B cell (primary cell): ENCODE measurements at regions of chr5 and their contacts with region 1.

Region 1: GRCh38 chr5:140639148-140639979 is at the start of gene TMCO6:
- DNase-seq: peak; percentile 95
- ATAC-seq: peak; percentile 99
- H3K4me3 ChIP-seq: peak within 1 kb of the TSS; percentile 65 to 92 (median 89)
- H3K4me3 Mint-ChIP-seq: peak within 1 kb of the TSS; percentile 91
- H3K27ac ChIP-seq: peak within 1 kb of the TSS; percentile 66 to 89
- H3K27ac Mint-ChIP-seq: peak within 1 kb of the TSS; percentile 92
- H3K4me1 ChIP-seq: peaks cover 5 to 14% of the 10 kb centered on the region in 2 donors
- H3K4me1 Mint-ChIP-seq: peaks cover 24% of the 10 kb centered on the region
- H3K27me3 ChIP-seq: no peaks in the 10 kb centered on the region
- H3K27me3 Mint-ChIP-seq: no peaks in the 10 kb centered on the region
- CTCF ChIP-seq: peak; percentile 77
- total RNA-seq, gene TMCO6: 33.3 and 36.2 TPM in 2 replicates

Region 2: GRCh38 chr5:140220032-140220697 is 419.2 kb before region 1 on chr5:
- CTCF ChIA-PET with region 1: no interaction called
- POLR2A ChIA-PET with region 1: no interaction called
- intact Hi-C with region 1: no loop called
- DNase-seq: no peak
- ATAC-seq: no peak
- H3K4me3 ChIP-seq: no peak overlapping the region
- H3K4me3 Mint-ChIP-seq: no peak overlapping the region
- H3K27ac ChIP-seq: no peak overlapping the region
- H3K27ac Mint-ChIP-seq: no peak overlapping the region
- H3K4me1 ChIP-seq: no peaks in the 10 kb centered on the region
- H3K4me1 Mint-ChIP-seq: no peaks in the 10 kb centered on the region
- H3K27me3 ChIP-seq: no peaks in the 10 kb centered on the region
- H3K27me3 Mint-ChIP-seq: no peaks in the 10 kb centered on the region
- CTCF ChIP-seq: no peak

Region 3: GRCh38 chr5:140547508-140548299 is 91.7 kb before region 1 on chr5 and contains the start of gene EIF4EBP3:
- CTCF ChIA-PET with region 1: interaction called, 13 read pairs
- POLR2A ChIA-PET with region 1: interaction called, 3 read pairs
- intact Hi-C with region 1: loop called (anchors 1 kb)
- DNase-seq: peak; percentile 91
- ATAC-seq: peak; percentile 97
- H3K4me3 ChIP-seq: peak within 1 kb of the TSS; percentile 35 to 93 (median 79)
- H3K4me3 Mint-ChIP-seq: peak within 1 kb of the TSS; percentile 94
- H3K27ac ChIP-seq: peak within 1 kb of the TSS; percentile 81 to 85
- H3K27ac Mint-ChIP-seq: peak within 1 kb of the TSS; percentile 94
- H3K4me1 ChIP-seq: peaks cover 10 to 30% of the 10 kb centered on the region in 2 donors
- H3K4me1 Mint-ChIP-seq: peaks cover 30% of the 10 kb centered on the region
- H3K27me3 ChIP-seq: no peaks in the 10 kb centered on the region
- H3K27me3 Mint-ChIP-seq: no peaks in the 10 kb centered on the region
- CTCF ChIP-seq: peak; percentile 77
- total RNA-seq, gene EIF4EBP3: 8.8 and 15.0 TPM in 2 replicates

Region 4: GRCh38 chr5:140564196-140565023 is 75.0 kb before region 1 on chr5 and contains the starts of genes APBB3 and SLC35A4:
- CTCF ChIA-PET with region 1: interaction called, 4 read pairs
- POLR2A ChIA-PET with region 1: interaction called, 3 read pairs
- intact Hi-C with region 1: loop called (anchors 1 kb)
- DNase-seq: peak; percentile 99
- ATAC-seq: peak; percentile 89
- H3K4me3 ChIP-seq: peak within 1 kb of the TSS; percentile 71 to 95 (median 91)
- H3K4me3 Mint-ChIP-seq: peak within 1 kb of the TSS; percentile 90
- H3K27ac ChIP-seq: peak within 1 kb of the TSS; percentile 91 to 92
- H3K27ac Mint-ChIP-seq: peak within 1 kb of the TSS; percentile 97
- H3K4me1 ChIP-seq: peaks cover 25 to 36% of the 10 kb centered on the region in 2 donors
- H3K4me1 Mint-ChIP-seq: peaks cover 48% of the 10 kb centered on the region
- H3K27me3 ChIP-seq: no peaks in the 10 kb centered on the region
- H3K27me3 Mint-ChIP-seq: no peaks in the 10 kb centered on the region
- CTCF ChIP-seq: no peak
- total RNA-seq, gene APBB3: 73.9 and 79.7 TPM in 2 replicates
- total RNA-seq, gene SLC35A4: 44.0 and 48.6 TPM in 2 replicates

Region 5: DNA sequence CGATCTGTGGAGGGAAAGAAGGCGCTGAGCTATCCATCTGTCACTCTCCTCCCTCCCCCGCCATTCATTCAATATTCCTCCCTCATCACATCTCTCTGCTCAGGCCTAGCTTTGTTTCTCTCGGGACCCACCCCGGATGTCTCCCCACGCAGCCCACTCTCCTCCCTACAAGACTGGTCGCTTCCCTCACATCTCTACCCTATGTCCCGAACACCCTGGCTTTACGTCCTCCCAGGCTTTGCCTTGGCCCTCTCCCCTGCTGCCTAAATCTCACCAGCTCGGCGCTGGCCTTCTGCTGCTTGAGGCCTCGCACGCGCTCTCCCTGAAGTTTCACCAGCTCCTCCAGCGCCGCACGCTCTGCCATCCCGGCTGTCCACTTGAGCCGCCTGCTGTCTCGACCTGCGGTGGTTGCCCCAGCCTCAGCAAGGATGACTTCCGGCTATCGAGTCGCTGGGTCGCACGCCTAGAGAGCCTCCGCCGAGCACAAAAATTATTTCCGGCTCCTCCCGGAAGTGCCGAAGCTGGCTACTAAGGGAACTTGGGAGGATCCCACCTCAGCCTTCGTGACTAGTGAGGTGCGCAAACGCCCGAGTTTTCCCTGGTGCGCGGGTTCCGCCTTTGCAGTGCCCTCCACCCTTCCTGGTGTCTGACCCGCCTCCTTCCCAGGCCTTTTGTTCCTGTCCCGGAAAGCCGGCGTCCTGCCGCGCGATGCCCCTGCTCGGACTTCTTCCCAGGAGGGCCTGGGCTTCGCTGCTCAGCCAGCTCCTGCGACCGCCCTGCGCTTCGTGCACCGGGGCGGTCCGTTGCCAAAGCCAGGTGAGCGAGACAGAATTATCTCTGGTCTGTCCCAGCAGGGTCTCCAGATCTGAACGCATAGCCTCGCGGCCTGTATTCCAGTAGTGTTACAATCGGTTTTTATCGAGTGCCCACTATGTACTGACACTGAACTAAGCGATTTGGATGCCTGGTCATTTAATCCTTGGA is 51.9 kb after region 1 on chr5 and contains the starts of genes HARS1 and HARS2:
- CTCF ChIA-PET with region 1: no interaction called
- POLR2A ChIA-PET with region 1: interaction called, 6 read pairs
- intact Hi-C with region 1: loop called (anchors 2 kb)
- DNase-seq: peak; percentile 87
- ATAC-seq: peak; percentile 97
- H3K4me3 ChIP-seq: peak within 1 kb of the TSS; percentile 89 to 98 (median 97)
- H3K4me3 Mint-ChIP-seq: peak within 1 kb of the TSS; percentile 99
- H3K27ac ChIP-seq: peak within 1 kb of the TSS; percentile 68 to 81
- H3K27ac Mint-ChIP-seq: peak within 1 kb of the TSS; percentile 94
- H3K4me1 ChIP-seq: peaks cover 14% of the 10 kb centered on the region in 2 donors
- H3K4me1 Mint-ChIP-seq: peaks cover 30% of the 10 kb centered on the region
- H3K27me3 ChIP-seq: no peaks in the 10 kb centered on the region
- H3K27me3 Mint-ChIP-seq: no peaks in the 10 kb centered on the region
- CTCF ChIP-seq: no peak
- total RNA-seq, gene HARS1: 60.5 and 65.6 TPM in 2 replicates
- total RNA-seq, gene HARS2: 65.1 and 68.0 TPM in 2 replicates

Region 6: DNA sequence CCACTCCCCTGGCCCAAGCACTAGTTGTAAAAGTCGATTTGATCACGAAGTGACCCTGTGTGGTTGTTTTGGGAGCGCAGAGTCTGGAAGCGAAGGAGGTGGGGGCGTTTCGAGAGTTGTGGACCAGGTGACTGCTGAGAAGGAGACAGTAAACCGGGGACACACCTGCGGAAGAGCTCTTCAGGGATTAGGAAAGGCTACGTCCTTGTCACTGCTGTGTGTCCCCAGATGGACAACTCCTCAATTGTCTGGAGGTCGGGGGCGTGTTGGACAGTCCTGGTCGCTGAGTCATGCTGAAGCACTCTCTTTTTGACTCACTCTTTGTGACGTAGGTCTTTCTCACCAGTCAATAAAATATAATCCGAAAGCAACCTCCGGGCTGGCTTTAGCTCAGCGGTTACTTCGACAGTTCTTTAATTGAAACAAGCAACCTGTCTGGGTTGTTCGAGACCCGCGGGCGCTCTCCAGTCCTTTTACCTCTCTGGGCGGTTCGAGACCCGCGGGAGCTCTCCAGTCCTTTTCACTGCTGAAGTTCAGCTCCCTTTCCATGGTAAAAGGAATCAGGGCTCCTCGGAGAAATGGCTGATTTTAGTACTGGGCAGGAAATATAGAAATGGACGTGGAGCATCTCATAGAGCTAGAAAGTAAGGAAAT is 71.7 kb after region 1 on chr5:
- CTCF ChIA-PET with region 1: interaction called, 4 read pairs
- POLR2A ChIA-PET with region 1: interaction called, 5 read pairs
- intact Hi-C with region 1: loop called (anchors 2 kb)
- DNase-seq: peak; percentile 96
- ATAC-seq: peak; percentile 85
- H3K4me3 ChIP-seq: peak overlapping the region; percentile 69 to 98 (median 73)
- H3K4me3 Mint-ChIP-seq: peak overlapping the region; percentile 95
- H3K27ac ChIP-seq: peak overlapping the region; percentile 64 to 78
- H3K27ac Mint-ChIP-seq: peak overlapping the region; percentile 96
- H3K4me1 ChIP-seq: peaks cover 5 to 11% of the 10 kb centered on the region in 2 donors
- H3K4me1 Mint-ChIP-seq: peaks cover 14% of the 10 kb centered on the region
- H3K27me3 ChIP-seq: no peaks in the 10 kb centered on the region
- H3K27me3 Mint-ChIP-seq: no peaks in the 10 kb centered on the region
- CTCF ChIP-seq: no peak